A673 (cell line): ENCODE measurements at regions of chr12 and their contacts with region 1.

Region 1: GRCh38 chr12:51871126-51871525 is 16.8 kb upstream of the ANKRD33 start:
- DNase-seq: no peak
- H3K4me3 ChIP-seq: no peak overlapping the region
- H3K27ac ChIP-seq: no peak overlapping the region
- H3K4me1 ChIP-seq: peaks cover 25% of the 10 kb centered on the region
- H3K27me3 ChIP-seq: no peaks in the 10 kb centered on the region
- CTCF ChIP-seq: no peak

Region 2: GRCh38 chr12:51424662-51425438 is 446.3 kb before region 1 on chr12 and contains the start of gene SLC4A8:
- CTCF ChIA-PET with region 1: interaction called, 5 read pairs
- POLR2A ChIA-PET with region 1: no interaction called
- intact Hi-C with region 1: loop called (anchors 2 kb)
- DNase-seq: peak; percentile 86
- H3K4me3 ChIP-seq: peak within 1 kb of the TSS; percentile 40
- H3K27ac ChIP-seq: no peak within 1 kb of the TSS
- H3K4me1 ChIP-seq: peaks cover 4% of the 10 kb centered on the region
- H3K27me3 ChIP-seq: peaks cover 9% of the 10 kb centered on the region
- CTCF ChIP-seq: peak; percentile 76
- total RNA-seq, gene SLC4A8: 0.73 and 1.1 TPM in 2 replicates